Heart left ventricle (tissue), 16 donors: ENCODE measurements at regions of chr16 and their contacts with region 1.

Region 1: GRCh38 chr16:26464576-26465266 is 602.0 kb upstream of the C16orf82 start:
- DNase-seq: no peak
- ATAC-seq: no peak
- H3K4me3 ChIP-seq: no peak overlapping the region
- H3K27ac ChIP-seq: no peak overlapping the region
- H3K4me1 ChIP-seq: no peaks in the 10 kb centered on the region
- H3K27me3 ChIP-seq: peaks cover 0 to 8% (median 0%) of the 10 kb centered on the region in 9 donors
- CTCF ChIP-seq: no peak
- POLR2A ChIP-seq: no peak

Region 2: DNA sequence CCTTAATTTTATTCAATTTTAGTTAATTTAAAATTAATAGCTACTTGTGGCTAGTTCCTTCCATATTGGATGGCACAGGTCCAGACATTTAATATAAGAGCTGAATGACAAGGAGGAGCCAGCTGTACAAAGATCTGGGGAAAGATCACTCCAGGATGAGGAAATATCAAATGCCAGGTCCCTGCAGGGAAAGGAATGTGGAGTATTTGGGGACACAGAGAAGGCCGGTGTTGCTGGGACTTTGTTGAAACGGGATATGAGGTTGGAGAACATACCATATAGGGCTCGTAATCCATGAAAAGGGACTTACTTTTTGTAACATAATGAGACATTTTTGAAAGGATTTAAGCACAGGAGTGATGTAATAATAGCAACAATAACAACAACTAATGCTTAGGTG is 346.1 kb before region 1 on chr16:
- intact Hi-C with region 1: no loop called
- DNase-seq: no peak
- ATAC-seq: no peak
- H3K4me3 ChIP-seq: no peak overlapping the region
- H3K27ac ChIP-seq: no peak overlapping the region
- H3K4me1 ChIP-seq: no peaks in the 10 kb centered on the region
- H3K27me3 ChIP-seq: no peaks in the 10 kb centered on the region
- CTCF ChIP-seq: no peak
- POLR2A ChIP-seq: no peak

Region 3: GRCh38 chr16:26360867-26361266 is 103.9 kb before region 1 on chr16:
- intact Hi-C with region 1: loop called in 1 of 10 experiments (anchors 5 kb)
- DNase-seq: no peak
- ATAC-seq: no peak
- H3K4me3 ChIP-seq: no peak overlapping the region
- H3K27ac ChIP-seq: no peak overlapping the region
- H3K4me1 ChIP-seq: no peaks in the 10 kb centered on the region
- H3K27me3 ChIP-seq: peaks cover 0 to 4% (median 0%) of the 10 kb centered on the region in 9 donors
- CTCF ChIP-seq: no peak
- POLR2A ChIP-seq: no peak

Region 4: GRCh38 chr16:26430618-26431017 is 34.1 kb before region 1 on chr16:
- intact Hi-C with region 1: no loop called
- DNase-seq: no peak
- ATAC-seq: no peak
- H3K4me3 ChIP-seq: no peak overlapping the region
- H3K27ac ChIP-seq: no peak overlapping the region
- H3K4me1 ChIP-seq: no peaks in the 10 kb centered on the region
- H3K27me3 ChIP-seq: no peaks in the 10 kb centered on the region
- CTCF ChIP-seq: no peak
- POLR2A ChIP-seq: no peak

Region 5: DNA sequence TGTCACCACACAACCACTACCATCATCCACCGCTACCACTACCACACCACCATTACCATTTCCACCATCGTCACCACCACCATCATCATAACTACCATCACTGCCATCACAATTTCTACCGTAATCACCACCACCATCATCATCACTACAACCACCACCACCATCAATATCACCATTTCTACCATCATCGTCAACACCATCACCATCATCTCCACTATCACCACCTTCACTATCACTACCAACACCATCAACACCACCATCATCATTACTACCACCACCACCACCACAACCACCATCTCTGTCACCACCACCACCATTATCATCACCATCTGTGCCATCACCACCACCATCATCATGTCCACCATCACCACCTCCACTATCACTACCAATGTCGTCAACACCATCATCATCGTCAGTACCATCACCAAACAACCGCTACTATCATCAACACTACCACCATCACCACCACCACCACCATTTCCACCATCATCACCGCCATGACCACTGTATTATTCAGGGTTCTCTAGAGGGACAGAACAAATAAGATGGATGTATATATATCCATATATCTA is 77.6 kb after region 1 on chr16:
- intact Hi-C with region 1: loop called in 1 of 10 experiments (anchors 10 kb)
- DNase-seq: no peak
- ATAC-seq: no peak
- H3K4me3 ChIP-seq: no peak overlapping the region
- H3K27ac ChIP-seq: no peak overlapping the region
- H3K4me1 ChIP-seq: no peaks in the 10 kb centered on the region
- H3K27me3 ChIP-seq: no peaks in the 10 kb centered on the region
- CTCF ChIP-seq: no peak
- POLR2A ChIP-seq: no peak